ENCODE measurements at regions of chr18 and their contacts with region 1.

Region 1: DNA sequence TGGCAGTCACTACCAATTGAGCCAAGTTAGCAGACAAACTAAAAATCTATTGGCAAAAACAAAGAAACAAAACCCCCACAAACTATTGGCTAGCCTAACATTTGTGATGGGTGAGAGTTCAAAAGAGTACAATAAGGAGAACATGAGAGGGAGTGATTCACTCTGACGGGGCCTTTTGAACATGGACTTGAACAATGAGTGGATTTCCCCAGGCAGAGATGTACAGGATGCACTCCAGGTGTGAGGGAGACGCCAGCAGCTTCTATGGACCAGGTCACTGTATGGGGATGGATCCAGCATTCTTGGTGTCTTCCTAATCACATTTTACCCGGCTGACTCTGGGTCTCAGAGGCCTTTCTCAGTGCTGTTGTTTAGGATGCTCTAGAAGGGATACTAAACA is 167.5 kb upstream of the SMAD2 start:
- DNase-seq: no peak
- H3K4me3 ChIP-seq: no peak overlapping the region
- H3K27ac ChIP-seq: no peak overlapping the region
- H3K27me3 ChIP-seq: peaks cover 3% of the 10 kb centered on the region
- CTCF ChIP-seq: no peak

Region 2: GRCh38 chr18:47795434-47795814 is 302.6 kb before region 1 on chr18:
- CTCF ChIA-PET with region 1: interaction called, 12 read pairs
- POLR2A ChIA-PET with region 1: no interaction called
- DNase-seq: no peak
- H3K4me3 ChIP-seq: no peak overlapping the region
- H3K27ac ChIP-seq: no peak overlapping the region
- H3K27me3 ChIP-seq: peaks cover 17% of the 10 kb centered on the region
- CTCF ChIP-seq: no peak

Measured in AG04450 (cell line).